Vagina (tissue), 2 donors: ENCODE measurements at regions of chr20 and their contacts with region 1.

Region 1: GRCh38 chr20:33475381-33476150 is 14.3 kb upstream of the CBFA2T2 start:
- DNase-seq: no peak
- H3K4me3 ChIP-seq: no peak overlapping the region
- H3K27ac ChIP-seq: no peak overlapping the region
- H3K4me1 ChIP-seq: peaks cover 4% of the 10 kb centered on the region
- H3K27me3 ChIP-seq: no peaks in the 10 kb centered on the region
- CTCF ChIP-seq: no peak
- POLR2A ChIP-seq: no peak

Region 2: DNA sequence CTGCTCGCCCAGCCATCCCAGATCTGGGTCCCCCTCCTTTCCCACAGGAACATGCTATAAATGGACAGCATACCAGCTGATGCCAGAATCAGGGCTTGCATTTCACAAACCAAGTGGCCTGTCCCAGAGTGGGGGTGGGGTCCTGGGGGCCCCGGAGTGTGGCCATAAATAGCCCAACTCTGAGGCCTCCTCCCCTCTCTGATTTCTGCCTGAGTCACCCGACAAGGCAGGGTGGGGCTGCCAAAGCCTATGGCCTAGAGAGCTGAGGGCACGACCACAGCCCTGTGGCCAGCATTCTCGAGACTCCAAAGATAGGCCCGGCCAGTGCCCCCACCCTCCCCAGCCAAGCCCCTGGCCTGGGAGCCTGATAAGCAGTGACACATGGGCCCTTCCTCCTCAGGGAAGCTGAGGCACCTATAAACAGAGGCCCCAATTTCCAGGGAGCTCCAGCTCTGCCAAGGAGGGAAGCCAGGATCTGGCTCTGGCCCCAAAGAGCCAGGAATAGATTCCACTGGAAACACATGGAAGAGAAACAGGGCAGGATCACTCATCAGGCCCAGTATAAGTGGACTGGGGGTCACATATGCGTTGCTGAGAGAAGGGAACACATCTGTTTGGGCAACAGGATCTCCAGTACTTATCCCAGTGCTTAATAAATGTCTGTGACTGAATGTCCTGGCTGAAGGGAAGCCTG is 52.3 kb before region 1 on chr20:
- intact Hi-C with region 1: no loop called
- DNase-seq: no peak
- H3K4me3 ChIP-seq: no peak overlapping the region
- H3K27ac ChIP-seq: peak overlapping the region; percentile 83
- H3K4me1 ChIP-seq: peaks cover 26% of the 10 kb centered on the region
- H3K27me3 ChIP-seq: no peaks in the 10 kb centered on the region
- CTCF ChIP-seq: no peak
- POLR2A ChIP-seq: no peak

Region 3: DNA sequence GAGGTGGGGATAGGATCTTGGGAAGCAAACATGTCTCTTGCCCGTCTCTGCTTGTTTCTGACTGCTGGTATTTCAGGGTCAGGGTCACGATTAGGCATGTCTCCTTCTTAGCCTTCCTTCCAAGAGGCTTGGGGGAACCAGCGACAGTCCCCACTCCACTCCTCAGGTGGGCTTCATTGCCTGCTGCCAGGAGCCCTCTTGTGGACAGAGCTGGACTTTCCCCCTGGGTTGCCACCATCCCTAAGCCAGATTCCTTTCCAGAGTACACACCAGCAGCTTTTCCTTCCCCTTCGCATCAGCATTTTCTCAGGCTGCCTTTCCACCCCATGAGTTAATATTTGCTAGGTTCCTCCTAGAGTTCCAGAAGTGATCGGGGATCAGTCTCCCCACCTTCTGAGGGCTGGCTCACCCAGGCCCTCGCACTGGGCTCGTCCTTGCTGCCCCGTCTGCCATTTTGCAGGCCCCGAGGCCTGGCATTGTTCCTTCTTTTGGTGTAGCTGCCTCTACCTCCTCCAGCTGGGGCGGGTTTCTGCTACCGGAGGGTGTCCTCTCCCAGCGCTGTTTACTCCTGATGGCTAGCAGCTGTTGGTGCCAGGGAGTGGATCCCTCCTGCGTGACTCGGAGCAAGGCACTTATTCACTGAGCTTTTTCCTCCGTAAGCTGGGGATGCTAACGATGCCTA is 177.8 kb after region 1 on chr20:
- intact Hi-C with region 1: loop called (anchors 10 kb)
- DNase-seq: no peak
- H3K4me3 ChIP-seq: peak overlapping the region; percentile 19 to 21
- H3K27ac ChIP-seq: peak overlapping the region; percentile 21
- H3K4me1 ChIP-seq: peaks cover 39% of the 10 kb centered on the region
- H3K27me3 ChIP-seq: no peaks in the 10 kb centered on the region
- CTCF ChIP-seq: peak; percentile 52 to 80 (median 58)
- POLR2A ChIP-seq: no peak